Psoas muscle (tissue), 8 donors: ENCODE measurements at regions of chr11 and their contacts with region 1.

Region 1: DNA sequence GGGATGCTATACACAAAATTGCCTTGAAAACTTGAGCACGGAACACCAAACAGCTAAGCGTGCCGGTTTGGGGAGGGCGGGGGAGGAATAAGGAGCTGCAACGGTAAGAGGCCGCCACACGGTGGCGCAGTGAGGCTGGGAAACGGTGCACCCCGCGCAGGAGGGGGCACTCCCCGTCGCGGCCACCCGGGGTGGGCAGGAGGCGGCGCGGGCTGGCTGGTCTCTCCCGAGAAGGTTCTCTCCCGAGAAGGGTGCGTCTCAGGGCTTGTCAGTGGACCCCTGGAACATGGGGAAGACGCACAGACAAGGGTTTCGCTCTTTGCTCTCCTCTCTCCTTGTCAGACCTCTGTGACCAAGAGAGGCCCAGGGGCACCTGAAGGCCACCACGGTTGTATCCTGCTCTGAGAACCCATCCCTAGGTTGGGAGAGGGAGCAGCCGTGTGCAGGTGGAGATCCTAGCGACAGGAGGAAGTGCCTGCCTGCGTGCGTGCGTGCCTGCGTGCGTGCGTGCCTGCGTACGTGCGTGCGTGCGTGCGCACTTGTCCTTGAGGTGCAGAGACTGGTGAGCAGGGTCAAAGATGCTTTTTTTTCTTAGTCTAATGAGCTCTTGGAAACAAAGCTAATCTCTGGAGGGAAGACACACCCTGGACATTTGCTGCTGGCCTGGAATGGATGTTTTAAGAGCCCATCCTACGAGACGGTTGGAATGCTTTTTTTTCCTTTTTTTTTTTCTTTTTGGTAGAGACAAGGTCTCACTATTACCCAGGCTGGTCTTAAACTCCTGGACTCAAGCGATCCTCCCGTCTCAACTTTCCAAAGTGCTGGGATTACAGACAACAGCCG is 18.1 kb upstream of the JAM3 start:
- DNase-seq: peak; percentile 81 to 85
- ATAC-seq: peak; percentile 67 to 80 (median 74)
- H3K4me3 ChIP-seq: peak overlapping the region; percentile 45
- H3K27ac ChIP-seq: no peak overlapping the region
- H3K4me1 ChIP-seq: peaks cover 10% of the 10 kb centered on the region
- H3K27me3 ChIP-seq: peaks cover 0 to 2% (median 0%) of the 10 kb centered on the region in 3 donors
- CTCF ChIP-seq: peak; percentile 91

Region 2: GRCh38 chr11:133927690-133928627 is 122.8 kb before region 1 on chr11:
- intact Hi-C with region 1: loop called (anchors 2 to 5 kb)
- DNase-seq: peak; percentile 59 to 79
- ATAC-seq: peak; percentile 91 to 95 (median 95)
- H3K4me3 ChIP-seq: no peak overlapping the region
- H3K27ac ChIP-seq: no peak overlapping the region
- H3K4me1 ChIP-seq: no peaks in the 10 kb centered on the region
- H3K27me3 ChIP-seq: no peaks in the 10 kb centered on the region
- CTCF ChIP-seq: peak; percentile 86

Region 3: DNA sequence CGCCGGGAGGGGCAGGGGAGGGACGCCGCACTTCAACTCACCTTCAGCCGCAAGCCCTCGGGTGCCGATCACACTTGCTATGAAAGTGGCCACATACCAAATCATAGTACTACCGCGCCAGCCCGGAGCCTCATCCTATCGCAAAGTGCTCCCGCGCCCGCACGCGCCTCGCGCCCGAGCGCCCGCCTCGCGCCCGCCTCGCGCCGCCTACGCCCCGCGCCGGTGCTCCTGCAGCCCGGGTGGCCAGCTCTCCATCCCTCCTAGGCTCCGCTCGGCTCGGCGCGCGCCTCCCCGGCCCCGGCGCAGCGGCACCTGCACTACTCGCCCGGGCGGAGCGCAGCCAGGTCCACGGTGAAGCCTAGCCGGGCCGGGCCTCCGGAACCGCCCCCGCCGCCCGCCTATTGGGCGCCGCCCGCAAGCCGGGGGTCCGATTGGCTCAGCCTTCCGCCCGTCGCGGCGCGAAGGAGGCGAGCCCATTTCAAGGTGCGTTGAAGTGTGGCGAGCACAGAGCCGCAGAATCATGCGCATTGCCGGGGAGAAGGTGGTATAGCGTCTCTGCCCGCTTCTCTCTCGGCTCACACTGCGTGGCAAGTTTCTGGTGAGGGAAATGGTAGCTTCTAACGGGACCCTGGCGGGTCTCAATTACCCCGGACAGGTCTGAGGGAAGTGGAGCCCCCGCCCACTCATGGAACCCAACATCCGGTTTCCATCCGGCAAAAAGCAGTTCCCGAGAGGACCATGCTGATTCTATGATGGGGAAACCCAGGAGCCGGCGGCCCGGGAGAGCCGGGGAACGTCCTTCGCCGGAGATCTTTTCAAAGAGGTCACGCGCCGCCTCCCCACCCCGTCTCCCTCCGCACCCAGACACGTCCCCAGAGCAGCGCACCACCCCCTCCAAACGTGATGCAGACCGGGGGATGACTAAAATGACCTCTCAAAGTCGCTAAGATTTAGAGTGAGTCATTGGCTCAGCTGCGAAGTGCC is 93.8 kb before region 1 on chr11 and contains the start of gene IGSF9B:
- intact Hi-C with region 1: no loop called
- DNase-seq: peak; percentile 83 to 92
- ATAC-seq: peak; percentile 97 to 98 (median 98)
- H3K4me3 ChIP-seq: peak within 1 kb of the TSS; percentile 82
- H3K27ac ChIP-seq: peak within 1 kb of the TSS; percentile 58
- H3K4me1 ChIP-seq: peaks cover 20% of the 10 kb centered on the region
- H3K27me3 ChIP-seq: peaks cover 0 to 24% (median 0%) of the 10 kb centered on the region in 3 donors
- CTCF ChIP-seq: no peak
- total RNA-seq, gene IGSF9B: 0.84 to 3.4 (median 1.0) TPM

Region 4: DNA sequence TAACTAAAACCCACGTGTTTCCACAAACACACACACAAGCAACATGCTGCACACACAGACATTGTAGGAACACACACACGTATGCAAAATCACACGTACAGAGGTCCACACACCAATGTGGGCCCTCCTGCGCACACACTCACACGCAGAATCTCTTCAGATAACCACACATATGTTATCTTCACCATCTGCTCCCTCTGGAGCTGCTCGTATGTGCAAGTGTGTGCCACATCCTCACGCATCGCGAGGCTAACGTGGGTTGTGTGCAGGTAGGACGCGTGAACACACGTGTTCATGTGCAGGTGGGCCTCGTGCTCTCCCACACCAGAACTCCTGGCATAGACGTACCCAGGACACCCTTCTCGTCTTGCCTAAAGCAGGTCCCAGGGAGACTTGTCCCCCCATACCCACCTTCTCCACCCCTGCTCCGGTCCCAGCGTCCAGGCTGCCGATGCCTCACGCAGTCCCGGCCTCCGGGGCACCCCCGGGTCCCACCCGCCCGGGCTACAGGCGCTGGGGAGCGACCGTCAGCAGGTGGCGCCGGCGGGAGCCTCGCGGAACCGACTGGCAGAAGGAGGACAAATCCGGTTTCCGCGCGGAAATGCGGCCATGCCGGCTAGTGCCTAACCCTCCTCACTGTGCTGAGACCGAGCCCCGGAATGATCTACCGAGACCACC is 83.7 kb before region 1 on chr11:
- intact Hi-C with region 1: loop called in 1 of 2 experiments (anchors 2 kb)
- DNase-seq: peak; percentile 47 to 76
- ATAC-seq: peak; percentile 63 to 87 (median 69)
- H3K4me3 ChIP-seq: peak overlapping the region; percentile 27
- H3K27ac ChIP-seq: no peak overlapping the region
- H3K4me1 ChIP-seq: peaks cover 4% of the 10 kb centered on the region
- H3K27me3 ChIP-seq: no peaks in the 10 kb centered on the region
- CTCF ChIP-seq: peak; percentile 53

Region 5: DNA sequence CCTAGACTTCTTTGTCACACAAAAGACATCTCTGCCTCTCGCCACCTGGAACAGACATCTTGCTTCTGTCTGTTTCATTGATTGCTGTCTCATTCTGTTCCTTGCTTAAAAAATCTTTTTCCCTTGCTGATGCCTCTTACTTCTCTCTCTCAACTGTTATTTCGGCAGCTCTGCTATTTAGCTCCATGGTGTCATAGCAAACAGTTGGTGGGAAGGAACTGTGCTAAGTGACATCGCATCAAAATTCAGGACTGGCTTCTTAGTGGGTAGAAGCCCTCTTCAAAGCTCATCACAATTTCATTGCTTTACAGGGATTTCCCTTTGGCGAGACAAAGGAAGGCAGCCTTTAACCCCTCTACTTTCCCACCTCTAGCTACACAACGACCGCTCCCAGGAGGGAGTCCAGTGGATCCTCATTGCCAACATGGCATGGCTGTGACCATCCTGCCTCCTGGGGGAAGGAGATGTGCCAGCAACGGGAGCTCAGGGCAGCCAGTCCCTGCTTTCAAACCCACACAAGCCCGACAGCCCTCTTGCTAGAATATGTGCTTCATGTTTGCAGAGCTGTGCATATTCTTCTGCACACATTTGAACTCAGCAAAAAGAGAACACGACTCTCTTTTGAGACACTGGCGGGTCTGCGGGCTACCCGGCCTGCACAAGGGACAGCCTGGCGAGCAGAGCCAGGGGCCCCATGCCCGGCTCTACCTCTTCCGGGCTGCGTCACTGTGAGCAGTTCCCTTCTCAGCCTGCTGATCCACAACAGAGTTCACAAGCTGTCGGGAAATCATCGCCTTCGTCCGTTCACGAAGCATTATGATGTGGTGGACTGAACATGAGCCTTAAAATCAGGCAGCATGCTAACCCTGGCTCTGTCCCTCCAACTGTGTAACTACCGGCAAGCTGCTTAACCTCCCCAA is 33.0 kb before region 1 on chr11:
- intact Hi-C with region 1: loop called in 1 of 2 experiments (anchors 1 kb)
- DNase-seq: no peak
- ATAC-seq: no peak
- H3K4me3 ChIP-seq: no peak overlapping the region
- H3K27ac ChIP-seq: no peak overlapping the region
- H3K4me1 ChIP-seq: peaks cover 6% of the 10 kb centered on the region
- H3K27me3 ChIP-seq: peaks cover 0 to 5% (median 0%) of the 10 kb centered on the region in 3 donors
- CTCF ChIP-seq: no peak

Region 6: GRCh38 chr11:134139873-134140331 is 89.1 kb after region 1 on chr11:
- intact Hi-C with region 1: loop called (anchors 1 to 2 kb)
- DNase-seq: peak in 1 of 2 donors; percentile 40
- ATAC-seq: peak; percentile 88 to 96 (median 94)
- H3K4me3 ChIP-seq: no peak overlapping the region
- H3K27ac ChIP-seq: no peak overlapping the region
- H3K4me1 ChIP-seq: no peaks in the 10 kb centered on the region
- H3K27me3 ChIP-seq: no peaks in the 10 kb centered on the region
- CTCF ChIP-seq: peak; percentile 90